Prostate gland (tissue), 2 donors: ENCODE measurements at regions of chr20 and their contacts with region 1.

Region 1: GRCh38 chr20:38926142-38926933 is at the start of gene FAM83D:
- DNase-seq: peak; percentile 89
- H3K4me3 ChIP-seq: peak within 1 kb of the TSS; percentile 48 to 49
- H3K27ac ChIP-seq: no peak within 1 kb of the TSS
- H3K4me1 ChIP-seq: peaks cover 8% of the 10 kb centered on the region
- H3K27me3 ChIP-seq: no peaks in the 10 kb centered on the region
- CTCF ChIP-seq: peak in 2 of 4 experiments; percentile 1 to 92
- POLR2A ChIP-seq: peak; percentile 87
- total RNA-seq, gene FAM83D: 10.2 to 12.6 TPM

Region 2: GRCh38 chr20:37864298-37864697 is 1062.0 kb before region 1 on chr20:
- intact Hi-C with region 1: no loop called
- DNase-seq: no peak
- H3K4me3 ChIP-seq: no peak overlapping the region
- H3K27ac ChIP-seq: peak overlapping the region in 1 of 2 donors; percentile 34
- H3K4me1 ChIP-seq: peaks cover 10% of the 10 kb centered on the region
- H3K27me3 ChIP-seq: no peaks in the 10 kb centered on the region
- CTCF ChIP-seq: no peak
- POLR2A ChIP-seq: no peak

Region 3: GRCh38 chr20:38962044-38962927 is 35.9 kb after region 1 on chr20 and contains the start of gene DHX35:
- intact Hi-C with region 1: loop called (anchors 5 kb)
- DNase-seq: peak; percentile 98
- H3K4me3 ChIP-seq: peak within 1 kb of the TSS; percentile 66 to 91
- H3K27ac ChIP-seq: peak within 1 kb of the TSS; percentile 79 to 86
- H3K4me1 ChIP-seq: peaks cover 5% of the 10 kb centered on the region
- H3K27me3 ChIP-seq: no peaks in the 10 kb centered on the region
- CTCF ChIP-seq: peak in 2 of 4 experiments; percentile 34 to 35
- POLR2A ChIP-seq: peak; percentile 48
- total RNA-seq, gene DHX35: 12.8 to 15.6 TPM

Region 4: GRCh38 chr20:38985603-38986170 is 59.3 kb after region 1 on chr20:
- intact Hi-C with region 1: no loop called
- DNase-seq: no peak
- H3K4me3 ChIP-seq: no peak overlapping the region
- H3K27ac ChIP-seq: peak overlapping the region; percentile 42 to 49
- H3K4me1 ChIP-seq: no peaks in the 10 kb centered on the region
- H3K27me3 ChIP-seq: no peaks in the 10 kb centered on the region
- CTCF ChIP-seq: no peak
- POLR2A ChIP-seq: no peak